A673 (cell line): ENCODE measurements at regions of chr1 and their contacts with region 1.

Region 1: GRCh38 chr1:30707412-30708360 is 15.7 kb downstream of the MATN1 start:
- DNase-seq: peak; percentile 86
- H3K4me3 ChIP-seq: no peak overlapping the region
- H3K27ac ChIP-seq: no peak overlapping the region
- H3K4me1 ChIP-seq: peaks cover 10% of the 10 kb centered on the region
- H3K27me3 ChIP-seq: no peaks in the 10 kb centered on the region
- CTCF ChIP-seq: peak; percentile 90

Region 2: GRCh38 chr1:29235955-29236684 is 1471.6 kb before region 1 on chr1 and contains the start of gene PTPRU:
- CTCF ChIA-PET with region 1: interaction called, 3 read pairs
- POLR2A ChIA-PET with region 1: no interaction called
- intact Hi-C with region 1: loop called (anchors 2 kb)
- DNase-seq: peak; percentile 80
- H3K4me3 ChIP-seq: peak within 1 kb of the TSS; percentile 60
- H3K27ac ChIP-seq: no peak within 1 kb of the TSS
- H3K4me1 ChIP-seq: peaks cover 14% of the 10 kb centered on the region
- H3K27me3 ChIP-seq: peaks cover 6% of the 10 kb centered on the region
- CTCF ChIP-seq: peak; percentile 49
- total RNA-seq, gene PTPRU: 6.8 and 15.6 TPM in 2 replicates

Region 3: DNA sequence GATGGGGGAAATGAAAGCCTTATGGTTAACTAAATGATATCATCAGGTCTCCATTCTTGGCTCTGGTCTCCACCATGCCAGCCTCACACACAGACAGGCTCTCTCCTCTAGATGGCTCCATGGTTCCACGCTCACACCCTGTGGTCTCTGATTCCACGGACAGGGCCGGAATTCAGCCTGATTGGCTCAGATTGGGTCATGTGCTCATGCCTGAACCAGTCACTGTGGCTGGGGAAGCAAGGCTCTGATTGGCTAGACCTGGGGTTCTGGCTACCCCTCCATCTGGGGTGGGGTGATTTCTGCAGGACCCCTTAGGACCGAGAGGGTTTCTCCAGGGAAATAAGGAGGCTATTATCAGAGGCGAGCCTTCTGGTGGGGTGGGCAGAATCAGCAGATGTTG is 1194.3 kb before region 1 on chr1:
- CTCF ChIA-PET with region 1: no interaction called
- POLR2A ChIA-PET with region 1: no interaction called
- intact Hi-C with region 1: loop called (anchors 2 kb)
- DNase-seq: peak; percentile 72
- H3K4me3 ChIP-seq: no peak overlapping the region
- H3K27ac ChIP-seq: no peak overlapping the region
- H3K4me1 ChIP-seq: no peaks in the 10 kb centered on the region
- H3K27me3 ChIP-seq: peaks cover 38% of the 10 kb centered on the region
- CTCF ChIP-seq: peak; percentile 65

Region 4: DNA sequence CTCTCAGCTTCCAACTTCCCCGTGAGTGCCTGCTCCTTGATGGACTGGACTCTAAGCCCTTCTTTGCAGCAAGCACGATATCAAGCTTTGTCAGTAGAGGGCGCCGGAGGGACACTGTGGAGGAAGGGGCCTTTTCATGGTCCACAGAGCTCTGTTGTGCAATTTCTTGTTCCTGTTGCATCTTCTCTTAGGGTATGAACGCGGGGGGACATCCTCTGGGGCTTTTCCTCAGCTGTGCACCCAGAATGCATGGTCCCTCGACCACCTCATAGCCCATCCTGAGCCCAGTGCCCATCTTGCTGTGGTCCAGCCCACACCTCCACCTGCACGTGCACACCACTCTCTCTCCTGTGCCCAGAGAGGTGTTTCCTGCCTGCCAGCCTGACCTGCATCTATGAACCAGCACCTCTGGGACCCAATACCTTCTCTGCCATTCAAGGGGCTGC is 914.6 kb before region 1 on chr1:
- CTCF ChIA-PET with region 1: interaction called, 3 read pairs
- POLR2A ChIA-PET with region 1: no interaction called
- intact Hi-C with region 1: loop called (anchors 10 kb)
- DNase-seq: peak; percentile 93
- H3K4me3 ChIP-seq: no peak overlapping the region
- H3K27ac ChIP-seq: peak overlapping the region; percentile 83
- H3K4me1 ChIP-seq: peaks cover 6% of the 10 kb centered on the region
- H3K27me3 ChIP-seq: no peaks in the 10 kb centered on the region
- CTCF ChIP-seq: peak; percentile 90

Region 5: GRCh38 chr1:30437059-30437576 is 270.6 kb before region 1 on chr1:
- CTCF ChIA-PET with region 1: no interaction called
- POLR2A ChIA-PET with region 1: no interaction called
- intact Hi-C with region 1: loop called (anchors 10 kb)
- DNase-seq: no peak
- H3K4me3 ChIP-seq: no peak overlapping the region
- H3K27ac ChIP-seq: no peak overlapping the region
- H3K4me1 ChIP-seq: no peaks in the 10 kb centered on the region
- H3K27me3 ChIP-seq: no peaks in the 10 kb centered on the region
- CTCF ChIP-seq: no peak